ENCODE measurements at regions of chr5 and their contacts with region 1.

Region 1: GRCh38 chr5:139293504-139294373 is at the start of gene MATR3:
- DNase-seq: peak; percentile 95
- H3K4me3 ChIP-seq: peak within 1 kb of the TSS; percentile 97
- H3K27ac ChIP-seq: peak within 1 kb of the TSS; percentile 84
- H3K4me1 ChIP-seq: peaks cover 42% of the 10 kb centered on the region
- CTCF ChIP-seq: no peak
- total RNA-seq, gene MATR3: 205 and 276 TPM in 2 replicates

Region 2: DNA sequence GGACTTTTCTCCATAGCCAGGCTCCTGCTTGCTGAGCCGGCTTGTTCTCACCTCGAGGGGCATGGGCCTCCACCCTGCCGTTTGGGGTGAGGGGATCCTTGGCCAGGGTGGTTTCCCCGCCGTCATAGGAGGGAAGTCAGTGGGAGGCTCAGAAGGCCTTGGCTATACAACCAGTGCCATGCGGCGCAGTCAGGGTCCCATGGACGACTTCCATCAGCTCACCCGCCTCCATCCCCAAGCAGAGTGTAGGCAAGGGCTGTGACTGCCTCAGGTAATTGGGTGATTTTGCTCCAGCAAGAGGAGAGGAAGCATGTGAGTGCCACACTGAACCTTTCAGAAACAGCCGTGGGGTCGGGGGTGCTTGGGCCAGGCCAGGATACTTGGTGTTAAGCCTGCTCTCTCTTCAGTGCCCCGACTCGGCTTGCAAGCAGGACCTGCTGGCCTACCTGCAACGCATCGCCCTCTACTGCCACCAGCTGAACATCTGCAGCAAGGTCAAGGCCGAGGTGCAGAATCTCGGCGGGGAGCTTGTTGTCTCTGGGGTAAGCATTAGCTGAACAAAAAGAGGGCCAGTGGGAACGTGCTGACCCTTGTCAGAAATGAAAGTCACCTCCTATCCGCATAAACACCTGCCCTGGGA is 361.4 kb before region 1 on chr5:
- CTCF ChIA-PET with region 1: no interaction called
- POLR2A ChIA-PET with region 1: no interaction called
- intact Hi-C with region 1: no loop called
- DNase-seq: peak; percentile 7
- H3K4me3 ChIP-seq: no peak overlapping the region
- H3K27ac ChIP-seq: no peak overlapping the region
- H3K4me1 ChIP-seq: no peaks in the 10 kb centered on the region
- CTCF ChIP-seq: peak; percentile 48

Region 3: GRCh38 chr5:139022528-139022927 is 271.2 kb before region 1 on chr5:
- CTCF ChIA-PET with region 1: no interaction called
- POLR2A ChIA-PET with region 1: no interaction called
- intact Hi-C with region 1: no loop called
- DNase-seq: no peak
- H3K4me3 ChIP-seq: no peak overlapping the region
- H3K27ac ChIP-seq: no peak overlapping the region
- H3K4me1 ChIP-seq: no peaks in the 10 kb centered on the region
- CTCF ChIP-seq: no peak

Region 4: GRCh38 chr5:139273572-139274289 is 20.0 kb before region 1 on chr5:
- CTCF ChIA-PET with region 1: interaction called, 23 read pairs
- POLR2A ChIA-PET with region 1: interaction called, 14 read pairs
- intact Hi-C with region 1: loop called (anchors 2 kb)
- DNase-seq: peak; percentile 92
- H3K4me3 ChIP-seq: peak overlapping the region; percentile 91
- H3K27ac ChIP-seq: peak overlapping the region; percentile 74
- H3K4me1 ChIP-seq: peaks cover 48% of the 10 kb centered on the region
- CTCF ChIP-seq: 0 out of 2 replicates have a peak, but pooled peaks have one; percentile 29

Region 5: GRCh38 chr5:139304391-139305324 is 10.9 kb after region 1 on chr5:
- CTCF ChIA-PET with region 1: no interaction called
- POLR2A ChIA-PET with region 1: interaction called, 13 read pairs
- intact Hi-C with region 1: no loop called
- DNase-seq: no peak
- H3K4me3 ChIP-seq: no peak overlapping the region
- H3K27ac ChIP-seq: no peak overlapping the region
- H3K4me1 ChIP-seq: peaks cover 84% of the 10 kb centered on the region
- CTCF ChIP-seq: no peak

Region 6: DNA sequence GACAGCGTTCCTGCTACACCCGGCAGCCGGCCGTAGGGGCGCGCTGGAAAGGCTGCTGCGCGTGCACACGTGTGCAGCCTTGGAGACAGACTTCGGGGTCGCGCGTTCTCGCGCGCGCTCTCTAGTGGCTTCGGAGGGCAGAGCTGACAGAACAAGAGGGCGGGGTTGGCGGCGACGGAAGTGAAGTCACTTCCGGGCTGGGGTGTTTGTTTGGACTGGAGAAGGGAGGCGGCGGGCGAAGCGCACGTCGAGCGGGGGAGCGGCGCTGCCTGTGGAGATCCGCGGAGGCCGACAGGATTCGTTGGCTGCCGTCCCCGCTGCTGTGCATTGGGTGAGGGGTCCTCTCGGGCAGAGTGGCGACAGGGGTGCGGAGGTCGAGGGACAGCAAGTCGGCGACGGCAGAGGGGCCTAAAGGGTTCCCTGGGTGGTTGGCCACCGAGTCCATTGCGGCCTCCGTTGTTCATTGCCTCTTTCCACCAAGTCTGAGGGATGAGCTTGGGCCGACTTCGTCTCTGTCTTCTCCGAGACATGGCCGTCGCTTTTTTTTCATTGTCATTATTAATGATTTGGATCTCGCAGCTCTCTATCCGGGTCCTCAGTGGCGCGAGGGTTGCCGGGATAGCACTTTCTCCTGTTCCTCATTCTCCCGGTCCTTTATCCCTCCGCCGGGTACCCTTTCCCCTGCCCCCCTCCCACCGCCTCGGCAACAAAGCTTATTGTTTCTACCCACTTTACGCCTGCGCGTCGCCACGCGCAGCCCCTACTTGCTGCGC is 48.1 kb after region 1 on chr5 and contains the start of gene PAIP2:
- CTCF ChIA-PET with region 1: interaction called, 3 read pairs
- POLR2A ChIA-PET with region 1: interaction called, 8 read pairs
- intact Hi-C with region 1: loop called (anchors 1 kb)
- DNase-seq: peak; percentile 97
- H3K4me3 ChIP-seq: peak within 1 kb of the TSS; percentile 88
- H3K27ac ChIP-seq: peak within 1 kb of the TSS; percentile 92
- H3K4me1 ChIP-seq: peaks cover 30% of the 10 kb centered on the region
- CTCF ChIP-seq: peak; percentile 79
- total RNA-seq, gene PAIP2: 64.3 and 73.6 TPM in 2 replicates